Cardiac septum (tissue), 1 donor: ENCODE measurements at regions of chr5 and their contacts with region 1.

Region 1: DNA sequence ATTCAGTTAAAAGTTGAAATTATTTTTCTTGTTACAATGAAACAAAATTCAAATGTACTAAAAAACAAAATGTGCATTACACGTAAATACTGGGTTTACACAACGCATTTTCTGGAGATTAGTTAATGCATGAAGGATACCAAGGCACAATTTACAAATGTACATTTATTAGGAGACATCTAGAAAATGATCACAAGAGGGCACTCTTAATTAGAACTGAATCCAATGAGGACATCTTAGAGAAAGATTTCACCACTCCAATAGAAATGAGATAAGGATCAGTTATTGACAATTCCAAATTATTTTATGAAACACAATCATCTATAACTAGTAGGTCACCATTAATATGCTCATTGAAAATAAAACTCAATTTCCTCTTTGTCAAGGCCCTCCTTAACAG is 36.6 kb upstream of the CDH12 start:
- DNase-seq: no peak

Region 2: GRCh38 chr5:23139338-23140171 is 249.8 kb after region 1 on chr5:
- intact Hi-C with region 1: loop called (anchors 2 kb)
- DNase-seq: no peak